ENCODE measurements at regions of chr1 and their contacts with region 1.

Region 1: GRCh38 chr1:229558571-229559335 is at the start of gene ABCB10:
- DNase-seq: peak; percentile 98
- H3K4me3 ChIP-seq: peak within 1 kb of the TSS; percentile 60 to 99 (median 94)
- H3K27ac ChIP-seq: peak within 1 kb of the TSS; percentile 80 to 94 (median 90)
- H3K4me1 ChIP-seq: peaks cover 9 to 55% (median 43%) of the 10 kb centered on the region in 6 donors
- H3K27me3 ChIP-seq: no peaks in the 10 kb centered on the region
- CTCF ChIP-seq: peak; percentile 65 to 95 (median 87)
- POLR2A ChIP-seq: peak; percentile 7 to 61 (median 10)
- total RNA-seq, gene ABCB10: 13.6 to 21.9 (median 16.3) TPM

Region 2: DNA sequence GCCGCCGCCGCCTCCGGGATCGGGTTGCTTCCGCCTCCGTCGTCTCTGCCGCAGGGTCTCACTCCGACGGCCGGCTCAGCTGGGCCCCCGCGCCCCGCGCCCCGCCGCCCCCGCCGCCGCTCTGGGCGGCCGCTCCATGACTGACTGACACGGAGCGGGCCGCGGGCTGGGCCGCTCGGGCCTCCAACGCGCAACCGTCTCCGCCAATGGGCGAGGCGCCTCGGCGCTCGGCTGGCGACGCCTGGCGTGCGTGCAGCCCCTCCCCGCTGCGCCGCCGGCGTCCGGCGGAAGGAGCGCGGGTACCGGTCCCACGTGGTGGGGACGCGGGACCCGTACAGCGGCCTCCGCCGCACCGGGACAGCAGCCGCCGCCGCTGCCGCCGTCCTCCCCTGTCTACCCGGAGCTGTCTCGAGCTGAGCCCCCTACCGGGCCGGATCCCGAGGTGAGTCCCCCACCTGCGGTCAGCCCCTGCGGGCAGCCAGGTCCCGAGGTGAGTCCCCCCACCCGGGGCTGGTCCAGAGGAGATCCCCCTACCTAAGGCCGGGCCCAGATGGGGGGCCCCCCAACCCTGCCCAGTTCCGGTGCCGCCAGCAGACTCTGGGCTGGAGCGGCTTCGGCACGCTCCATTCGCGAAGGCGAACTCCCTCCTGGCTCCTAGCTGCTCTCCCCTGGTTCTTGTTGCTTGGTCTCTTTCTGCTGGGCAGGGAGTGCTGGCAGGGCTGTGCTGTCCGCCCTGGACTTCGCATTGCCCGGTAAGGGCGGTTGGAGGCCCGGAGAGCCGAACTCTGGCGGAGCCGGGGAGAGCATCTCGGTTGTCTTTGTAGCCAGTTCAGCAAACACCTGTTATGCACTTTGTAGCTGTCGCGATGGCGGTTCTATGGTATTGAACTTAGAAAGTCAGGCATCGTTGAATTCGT is 67.4 kb after region 1 on chr1 and contains the starts of genes TAF5L and URB2:
- intact Hi-C with region 1: loop called (anchors 5 kb)
- DNase-seq: peak; percentile 98
- H3K4me3 ChIP-seq: peak within 1 kb of the TSS; percentile 87 to 100 (median 94)
- H3K27ac ChIP-seq: peak within 1 kb of the TSS; percentile 75 to 96 (median 90)
- H3K4me1 ChIP-seq: peaks cover 21 to 69% (median 39%) of the 10 kb centered on the region in 6 donors
- H3K27me3 ChIP-seq: no peaks in the 10 kb centered on the region
- CTCF ChIP-seq: peak in 2 of 11 experiments; percentile 23 to 41
- POLR2A ChIP-seq: peak in 1 of 3 donors; percentile 0
- total RNA-seq, gene TAF5L: 15.8 to 24.7 (median 18.2) TPM
- total RNA-seq, gene URB2: 6.7 to 13.6 (median 9.8) TPM